Activated CD8-positive, alpha-beta memory T cell treated with anti-CD3 and anti-CD28 coated beads, Interleukin-2, amount 10 ng/mL, durations not matched to agents 7 days and 5 days (primary cell): ENCODE measurements at regions of chr17 and their contacts with region 1.

Region 1: GRCh38 chr17:43483674-43484372 is at the start of gene DHX8:
- DNase-seq: peak; percentile 98
- ATAC-seq: peak; percentile 98
- H3K4me3 Mint-ChIP-seq: peak within 1 kb of the TSS; percentile 100
- H3K27ac Mint-ChIP-seq: peak within 1 kb of the TSS; percentile 96
- H3K4me1 Mint-ChIP-seq: peaks cover 29% of the 10 kb centered on the region
- H3K27me3 Mint-ChIP-seq: no peaks in the 10 kb centered on the region
- total RNA-seq, gene DHX8: 59.1 to 66.2 TPM

Region 2: GRCh38 chr17:43338886-43339516 is 144.8 kb before region 1 on chr17:
- CTCF ChIA-PET with region 1: interaction called, 12 read pairs
- DNase-seq: peak; percentile 73
- ATAC-seq: no peak
- H3K4me3 Mint-ChIP-seq: no peak overlapping the region
- H3K27ac Mint-ChIP-seq: no peak overlapping the region
- H3K4me1 Mint-ChIP-seq: peaks cover 14% of the 10 kb centered on the region
- H3K27me3 Mint-ChIP-seq: no peaks in the 10 kb centered on the region

Region 3: GRCh38 chr17:43360739-43361505 is 122.9 kb before region 1 on chr17:
- CTCF ChIA-PET with region 1: interaction called, 25 read pairs
- DNase-seq: peak; percentile 97
- ATAC-seq: peak; percentile 82
- H3K4me3 Mint-ChIP-seq: peak overlapping the region; percentile 88
- H3K27ac Mint-ChIP-seq: peak overlapping the region; percentile 99
- H3K4me1 Mint-ChIP-seq: peaks cover 32% of the 10 kb centered on the region
- H3K27me3 Mint-ChIP-seq: no peaks in the 10 kb centered on the region

Region 4: GRCh38 chr17:43367737-43368242 is 116.0 kb before region 1 on chr17:
- CTCF ChIA-PET with region 1: interaction called, 39 read pairs
- DNase-seq: peak; percentile 74
- ATAC-seq: peak; percentile 57
- H3K4me3 Mint-ChIP-seq: peak overlapping the region; percentile 90
- H3K27ac Mint-ChIP-seq: peak overlapping the region; percentile 99
- H3K4me1 Mint-ChIP-seq: peaks cover 40% of the 10 kb centered on the region
- H3K27me3 Mint-ChIP-seq: no peaks in the 10 kb centered on the region

Region 5: GRCh38 chr17:43388359-43389045 is 95.3 kb before region 1 on chr17:
- CTCF ChIA-PET with region 1: interaction called, 222 read pairs
- DNase-seq: peak; percentile 94
- ATAC-seq: peak; percentile 79
- H3K4me3 Mint-ChIP-seq: peak overlapping the region; percentile 97
- H3K27ac Mint-ChIP-seq: peak overlapping the region; percentile 98
- H3K4me1 Mint-ChIP-seq: peaks cover 21% of the 10 kb centered on the region
- H3K27me3 Mint-ChIP-seq: no peaks in the 10 kb centered on the region

Region 6: GRCh38 chr17:43393944-43394482 is 89.8 kb before region 1 on chr17:
- CTCF ChIA-PET with region 1: interaction called, 222 read pairs
- DNase-seq: peak; percentile 94
- ATAC-seq: peak; percentile 57
- H3K4me3 Mint-ChIP-seq: no peak overlapping the region
- H3K27ac Mint-ChIP-seq: peak overlapping the region; percentile 43
- H3K4me1 Mint-ChIP-seq: peaks cover 31% of the 10 kb centered on the region
- H3K27me3 Mint-ChIP-seq: no peaks in the 10 kb centered on the region

Region 7: DNA sequence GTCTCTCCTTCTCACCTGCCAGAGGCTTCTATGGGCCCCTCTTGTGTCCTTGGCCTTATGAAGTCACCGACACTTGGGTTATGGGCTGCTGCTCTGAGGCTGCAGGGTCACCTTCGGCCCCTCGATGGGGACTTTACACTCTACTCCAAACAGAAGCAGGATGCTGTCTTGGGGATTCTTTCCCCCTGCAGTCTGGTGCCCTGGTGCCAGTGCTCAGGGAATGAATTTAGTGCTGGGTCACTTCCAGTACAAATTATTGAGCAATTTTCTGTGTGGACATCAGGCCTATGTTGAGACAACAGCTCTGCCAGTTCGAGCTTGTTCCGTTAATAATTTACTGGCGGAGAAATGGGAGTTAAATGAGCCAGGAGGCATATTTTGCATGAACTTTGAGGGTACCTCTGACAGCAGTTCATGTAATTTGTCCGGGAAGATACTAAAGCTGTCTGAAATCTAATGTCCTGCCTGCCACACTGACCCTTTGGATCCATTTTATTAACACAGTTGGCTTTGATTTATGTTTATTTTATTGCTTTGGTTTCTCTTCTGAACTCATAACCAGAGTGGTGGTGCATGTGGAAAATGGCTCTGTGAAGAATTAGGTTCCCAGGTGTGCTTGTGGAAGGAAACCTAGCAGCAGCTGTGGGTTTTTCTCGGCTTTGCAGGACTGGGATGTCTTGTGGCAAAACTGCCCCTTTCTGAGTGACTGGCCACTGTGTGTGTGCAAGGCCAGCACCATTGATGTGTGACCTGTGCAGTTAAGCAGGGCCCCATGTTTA is 34.2 kb before region 1 on chr17:
- CTCF ChIA-PET with region 1: no interaction called
- DNase-seq: no peak
- ATAC-seq: no peak
- H3K4me3 Mint-ChIP-seq: no peak overlapping the region
- H3K27ac Mint-ChIP-seq: no peak overlapping the region
- H3K4me1 Mint-ChIP-seq: no peaks in the 10 kb centered on the region
- H3K27me3 Mint-ChIP-seq: peaks cover 2% of the 10 kb centered on the region

Region 8: GRCh38 chr17:43467981-43468581 is 15.7 kb before region 1 on chr17:
- CTCF ChIA-PET with region 1: interaction called, 30 read pairs
- DNase-seq: no peak
- ATAC-seq: no peak
- H3K4me3 Mint-ChIP-seq: no peak overlapping the region
- H3K27ac Mint-ChIP-seq: no peak overlapping the region
- H3K4me1 Mint-ChIP-seq: no peaks in the 10 kb centered on the region
- H3K27me3 Mint-ChIP-seq: peaks cover 14% of the 10 kb centered on the region